Naive thymus-derived CD4-positive, alpha-beta T cell (primary cell): ENCODE measurements at regions of chr4 and their contacts with region 1.

Region 1: GRCh38 chr4:22356987-22357596 is 158.8 kb downstream of the ADGRA3 start:
- DNase-seq: peak in 1 of 9 donors; percentile 3
- ATAC-seq: peak; percentile 46
- H3K4me3 ChIP-seq: no peak overlapping the region
- H3K4me3 Mint-ChIP-seq: no peak overlapping the region
- H3K27ac ChIP-seq: no peak overlapping the region
- H3K27ac Mint-ChIP-seq: no peak overlapping the region
- H3K4me1 ChIP-seq: no peaks in the 10 kb centered on the region
- H3K4me1 Mint-ChIP-seq: peaks cover 0 to 2% (median 0%) of the 10 kb centered on the region in 7 donors
- H3K27me3 ChIP-seq: no peaks in the 10 kb centered on the region
- H3K27me3 Mint-ChIP-seq: peaks cover 4 to 6% (median 5%) of the 10 kb centered on the region in 5 donors

Region 2: DNA sequence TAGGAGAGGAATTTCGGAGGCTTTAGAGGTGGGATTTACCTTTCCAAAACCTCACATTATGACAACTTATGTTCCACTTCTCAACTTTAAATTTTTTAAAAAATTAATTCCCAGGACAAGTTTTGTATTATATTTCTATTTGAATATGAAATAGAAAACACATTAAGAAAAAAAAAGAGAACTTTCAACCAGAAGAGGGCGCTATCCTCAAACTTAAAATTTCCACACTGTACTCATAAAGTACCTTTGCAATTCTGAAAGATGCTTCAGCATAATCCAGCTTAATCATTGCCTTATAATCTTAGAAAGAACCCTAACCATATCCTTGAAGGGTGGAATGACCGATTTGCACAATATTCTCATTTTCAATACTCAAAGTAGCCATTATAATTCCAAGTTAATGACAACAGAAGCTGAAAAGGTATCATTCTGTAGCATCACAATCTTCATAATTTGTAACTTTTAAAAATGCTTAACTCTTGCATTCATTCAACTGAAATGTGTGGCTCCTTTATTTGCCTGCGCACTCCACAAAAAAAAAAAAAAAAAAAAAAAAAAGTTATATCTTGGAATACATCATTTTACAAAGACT is 566.6 kb before region 1 on chr4:
- CTCF ChIA-PET with region 1: no interaction called
- POLR2A ChIA-PET with region 1: no interaction called
- intact Hi-C with region 1: loop called in 1 of 2 experiments (anchors 1 kb)
- DNase-seq: peak in 3 of 9 donors; percentile 5 to 13 (median 13)
- ATAC-seq: no peak
- H3K4me3 ChIP-seq: no peak overlapping the region
- H3K4me3 Mint-ChIP-seq: no peak overlapping the region
- H3K27ac ChIP-seq: no peak overlapping the region
- H3K27ac Mint-ChIP-seq: no peak overlapping the region
- H3K4me1 ChIP-seq: no peaks in the 10 kb centered on the region
- H3K4me1 Mint-ChIP-seq: peaks cover 0 to 2% (median 0%) of the 10 kb centered on the region in 7 donors
- H3K27me3 ChIP-seq: no peaks in the 10 kb centered on the region
- H3K27me3 Mint-ChIP-seq: peaks cover 0 to 4% (median 0%) of the 10 kb centered on the region in 5 donors

Region 3: DNA sequence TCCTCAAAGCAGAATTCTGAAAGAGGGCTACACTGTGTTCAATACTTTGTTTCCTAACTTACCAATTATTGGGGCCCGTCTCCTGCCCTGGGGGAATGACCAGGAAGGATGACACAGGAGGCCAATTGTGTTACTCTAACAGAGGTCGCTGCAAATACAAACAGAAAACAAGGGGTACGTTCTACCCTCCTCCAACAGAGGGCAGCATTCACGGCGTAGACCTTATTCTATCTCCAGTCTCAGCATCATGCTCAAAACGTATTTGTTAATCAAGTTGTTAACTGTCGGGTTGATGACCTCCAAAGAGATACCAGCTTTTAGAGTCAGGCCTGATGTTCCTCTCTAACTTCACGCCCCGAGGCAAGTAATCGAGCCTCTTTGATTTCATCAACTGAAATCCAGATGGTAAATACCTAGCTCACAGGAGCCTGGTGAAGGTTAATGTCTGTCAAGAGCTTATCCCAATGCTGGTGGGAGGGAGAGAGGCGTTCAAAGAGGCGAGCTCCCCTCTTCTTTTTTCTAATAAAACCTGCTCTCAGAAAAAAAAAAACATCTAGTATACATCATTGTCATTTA is 227.6 kb before region 1 on chr4:
- CTCF ChIA-PET with region 1: no interaction called
- POLR2A ChIA-PET with region 1: no interaction called
- intact Hi-C with region 1: loop called in 1 of 2 experiments (anchors 1 kb)
- DNase-seq: no peak
- ATAC-seq: no peak
- H3K4me3 ChIP-seq: no peak overlapping the region
- H3K4me3 Mint-ChIP-seq: no peak overlapping the region
- H3K27ac ChIP-seq: no peak overlapping the region
- H3K27ac Mint-ChIP-seq: no peak overlapping the region
- H3K4me1 ChIP-seq: no peaks in the 10 kb centered on the region
- H3K4me1 Mint-ChIP-seq: no peaks in the 10 kb centered on the region
- H3K27me3 ChIP-seq: no peaks in the 10 kb centered on the region
- H3K27me3 Mint-ChIP-seq: no peaks in the 10 kb centered on the region

Region 4: GRCh38 chr4:22634541-22635181 is 277.6 kb after region 1 on chr4:
- CTCF ChIA-PET with region 1: no interaction called
- POLR2A ChIA-PET with region 1: no interaction called
- intact Hi-C with region 1: no loop called
- DNase-seq: no peak
- ATAC-seq: no peak
- H3K4me3 ChIP-seq: no peak overlapping the region
- H3K4me3 Mint-ChIP-seq: no peak overlapping the region
- H3K27ac ChIP-seq: no peak overlapping the region
- H3K27ac Mint-ChIP-seq: no peak overlapping the region
- H3K4me1 ChIP-seq: no peaks in the 10 kb centered on the region
- H3K4me1 Mint-ChIP-seq: no peaks in the 10 kb centered on the region
- H3K27me3 ChIP-seq: no peaks in the 10 kb centered on the region
- H3K27me3 Mint-ChIP-seq: no peaks in the 10 kb centered on the region